Activated CD8-positive, alpha-beta T cell treated with anti-CD3 and anti-CD28 coated beads, Interleukin-2, amount 10 ng/mL, durations not matched to agents 7 days and 5 days (primary cell): ENCODE measurements at regions of chr1 and their contacts with region 1.

Region 1: DNA sequence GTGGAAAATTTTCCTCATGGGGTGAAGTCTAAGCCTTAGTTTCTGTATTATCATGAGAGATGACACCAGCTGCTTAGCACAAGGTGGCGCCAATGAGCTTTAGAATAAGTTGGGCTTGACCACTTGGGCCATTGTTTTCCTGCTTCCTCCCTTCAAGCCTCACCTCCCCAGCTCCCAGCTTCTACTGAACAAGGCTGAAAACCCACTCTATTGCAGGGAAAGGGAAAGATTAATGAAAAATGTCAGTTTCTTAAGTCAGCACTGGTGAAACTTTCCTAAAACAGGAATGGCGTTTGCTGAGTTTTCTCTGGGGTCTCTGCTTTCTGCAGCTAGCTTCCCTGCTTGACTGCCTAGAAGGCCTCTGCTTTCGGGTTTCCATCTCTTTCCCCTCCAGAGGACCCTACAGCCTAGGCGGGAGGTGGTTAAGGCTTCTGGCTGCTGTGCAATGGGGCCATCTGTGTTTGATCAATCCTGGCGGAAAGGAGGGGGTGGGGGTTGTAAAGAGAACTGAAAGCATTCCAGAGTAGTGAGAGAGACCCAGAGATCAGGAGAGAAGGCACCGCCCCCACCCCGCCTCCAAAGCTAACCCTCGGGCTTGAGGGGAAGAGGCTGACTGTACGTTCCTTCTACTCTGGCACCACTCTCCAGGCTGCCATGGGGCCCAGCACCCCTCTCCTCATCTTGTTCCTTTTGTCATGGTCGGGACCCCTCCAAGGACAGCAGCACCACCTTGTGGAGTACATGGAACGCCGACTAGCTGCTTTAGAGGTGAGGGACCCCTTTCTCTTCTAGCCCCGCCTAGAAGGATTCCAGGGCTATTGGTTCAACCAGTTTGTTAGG is at the start of gene OLFML3:
- DNase-seq: peak; percentile 76
- ATAC-seq: no peak
- H3K4me3 Mint-ChIP-seq: no peak within 1 kb of the TSS
- H3K27ac Mint-ChIP-seq: peak within 1 kb of the TSS; percentile 19
- H3K4me1 Mint-ChIP-seq: peaks cover 49% of the 10 kb centered on the region
- H3K27me3 Mint-ChIP-seq: no peaks in the 10 kb centered on the region
- total RNA-seq, gene OLFML3: 0.42 to 0.78 TPM

Region 2: DNA sequence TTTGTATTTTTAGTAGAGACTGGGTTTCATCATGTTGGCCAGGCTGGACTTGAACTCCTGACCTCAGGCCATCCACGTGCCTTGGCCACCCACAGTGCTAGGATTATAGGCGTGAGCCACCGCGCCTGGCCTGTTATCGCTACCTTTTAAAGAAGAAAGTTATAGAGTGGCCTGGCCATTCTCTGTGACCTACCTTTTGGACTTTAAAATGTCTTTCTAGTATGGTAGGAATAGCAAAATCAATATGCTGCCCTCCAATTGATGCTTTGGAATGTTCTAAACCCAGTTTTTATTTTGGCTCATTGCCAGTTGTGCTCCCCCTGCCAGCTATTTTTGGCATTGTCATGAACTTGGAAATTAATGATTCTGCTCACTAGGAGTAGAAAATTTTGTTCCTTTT is 30.1 kb before region 1 on chr1:
- CTCF ChIA-PET with region 1: interaction called, 13 read pairs
- POLR2A ChIA-PET with region 1: interaction called, 3 read pairs
- DNase-seq: no peak
- ATAC-seq: no peak
- H3K4me3 Mint-ChIP-seq: no peak overlapping the region
- H3K27ac Mint-ChIP-seq: peak overlapping the region; percentile 36
- H3K4me1 Mint-ChIP-seq: peaks cover 59% of the 10 kb centered on the region
- H3K27me3 Mint-ChIP-seq: no peaks in the 10 kb centered on the region

Region 3: DNA sequence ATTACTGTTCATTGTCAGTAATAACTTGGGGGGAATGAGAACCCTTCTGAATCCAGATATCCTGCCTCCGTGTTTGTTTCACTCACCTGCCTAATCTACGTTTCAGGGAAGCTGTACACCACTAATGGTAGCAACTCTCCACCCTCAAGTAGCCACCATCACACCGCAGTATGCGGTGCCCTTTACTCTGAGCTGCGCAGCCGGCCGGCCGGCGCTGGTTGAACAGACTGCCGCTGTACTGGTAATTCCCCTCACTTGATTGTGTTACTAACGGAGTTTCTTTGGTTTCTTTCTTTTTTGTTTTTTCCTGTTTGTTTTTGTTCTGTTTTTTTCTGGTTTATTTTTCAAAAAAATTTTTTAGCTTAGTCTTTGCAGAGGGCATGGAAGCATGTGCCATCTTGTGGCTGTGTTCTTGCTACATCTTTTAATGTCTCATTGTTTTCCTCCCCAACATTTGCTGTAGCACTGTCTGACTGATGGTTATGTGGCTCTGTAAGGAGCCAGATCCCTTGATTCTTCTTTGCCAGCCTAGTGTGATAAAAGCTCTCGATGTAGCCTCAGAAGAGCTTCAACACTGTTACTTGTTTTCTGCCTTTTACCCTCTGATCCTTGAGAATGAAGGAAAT is 15.7 kb before region 1 on chr1:
- CTCF ChIA-PET with region 1: interaction called, 11 read pairs
- POLR2A ChIA-PET with region 1: no interaction called
- DNase-seq: no peak
- ATAC-seq: no peak
- H3K4me3 Mint-ChIP-seq: no peak overlapping the region
- H3K27ac Mint-ChIP-seq: no peak overlapping the region
- H3K4me1 Mint-ChIP-seq: peaks cover 6% of the 10 kb centered on the region
- H3K27me3 Mint-ChIP-seq: no peaks in the 10 kb centered on the region

Region 4: DNA sequence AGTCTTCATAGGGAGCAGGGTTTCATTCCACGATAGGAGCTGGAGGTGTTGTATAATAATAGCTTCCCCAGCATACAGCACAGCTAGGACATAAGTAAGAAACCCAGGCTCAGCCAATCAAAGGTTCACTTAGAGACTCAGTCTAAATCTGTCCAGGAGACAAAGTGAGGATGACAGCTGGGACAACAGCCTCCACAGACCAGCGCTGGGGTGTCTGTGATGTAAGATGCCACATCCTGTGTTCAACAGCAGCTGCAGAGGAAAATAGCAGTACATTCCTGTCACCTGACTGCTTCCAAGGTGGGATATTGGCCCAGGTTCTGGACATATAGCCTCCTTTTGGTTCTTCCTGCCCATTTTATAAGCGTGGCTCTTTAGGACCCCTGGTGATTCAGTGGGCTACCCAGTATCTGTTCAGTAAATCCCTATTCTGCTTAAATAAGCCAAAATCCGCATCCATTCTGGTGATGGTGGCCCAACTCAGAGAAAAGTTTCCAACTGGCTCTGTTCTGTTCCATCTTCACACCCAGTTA is 351.4 kb after region 1 on chr1:
- CTCF ChIA-PET with region 1: interaction called, 15 read pairs
- POLR2A ChIA-PET with region 1: interaction called, 4 read pairs
- DNase-seq: peak; percentile 69
- ATAC-seq: peak; percentile 70
- H3K4me3 Mint-ChIP-seq: no peak overlapping the region
- H3K27ac Mint-ChIP-seq: peak overlapping the region; percentile 43
- H3K4me1 Mint-ChIP-seq: peaks cover 70% of the 10 kb centered on the region
- H3K27me3 Mint-ChIP-seq: peaks cover 2% of the 10 kb centered on the region